Heart left ventricle (tissue), 16 donors: ENCODE measurements at regions of chr13 and their contacts with region 1.

Region 1: GRCh38 chr13:97202761-97203160 is 19.4 kb upstream of the MBNL2 start:
- DNase-seq: no peak
- ATAC-seq: no peak
- H3K4me3 ChIP-seq: no peak overlapping the region
- H3K27ac ChIP-seq: no peak overlapping the region
- H3K4me1 ChIP-seq: no peaks in the 10 kb centered on the region
- H3K27me3 ChIP-seq: peaks cover 0 to 6% (median 0%) of the 10 kb centered on the region in 9 donors
- CTCF ChIP-seq: no peak
- POLR2A ChIP-seq: no peak

Region 2: GRCh38 chr13:96519380-96519779 is 683.4 kb before region 1 on chr13:
- intact Hi-C with region 1: no loop called
- DNase-seq: no peak
- ATAC-seq: no peak
- H3K4me3 ChIP-seq: no peak overlapping the region
- H3K27ac ChIP-seq: no peak overlapping the region
- H3K4me1 ChIP-seq: no peaks in the 10 kb centered on the region
- H3K27me3 ChIP-seq: no peaks in the 10 kb centered on the region
- CTCF ChIP-seq: no peak
- POLR2A ChIP-seq: no peak

Region 3: GRCh38 chr13:97124916-97125809 is 77.6 kb before region 1 on chr13:
- intact Hi-C with region 1: loop called in 1 of 10 experiments (anchors 5 kb)
- DNase-seq: peak in 1 of 5 donors; percentile 39
- ATAC-seq: peak; percentile 46 to 65 (median 50)
- H3K4me3 ChIP-seq: peak overlapping the region in 2 of 12 donors; percentile 4 to 11
- H3K27ac ChIP-seq: peak overlapping the region in 5 of 12 donors; percentile 14 to 67 (median 43)
- H3K4me1 ChIP-seq: peaks cover 0 to 34% (median 18%) of the 10 kb centered on the region in 12 donors
- H3K27me3 ChIP-seq: no peaks in the 10 kb centered on the region
- CTCF ChIP-seq: peak in 6 of 12 donors; percentile 12 to 43 (median 27)
- POLR2A ChIP-seq: no peak